Natural killer cell (primary cell): ENCODE measurements at regions of chr6 and their contacts with region 1.

Region 1: DNA sequence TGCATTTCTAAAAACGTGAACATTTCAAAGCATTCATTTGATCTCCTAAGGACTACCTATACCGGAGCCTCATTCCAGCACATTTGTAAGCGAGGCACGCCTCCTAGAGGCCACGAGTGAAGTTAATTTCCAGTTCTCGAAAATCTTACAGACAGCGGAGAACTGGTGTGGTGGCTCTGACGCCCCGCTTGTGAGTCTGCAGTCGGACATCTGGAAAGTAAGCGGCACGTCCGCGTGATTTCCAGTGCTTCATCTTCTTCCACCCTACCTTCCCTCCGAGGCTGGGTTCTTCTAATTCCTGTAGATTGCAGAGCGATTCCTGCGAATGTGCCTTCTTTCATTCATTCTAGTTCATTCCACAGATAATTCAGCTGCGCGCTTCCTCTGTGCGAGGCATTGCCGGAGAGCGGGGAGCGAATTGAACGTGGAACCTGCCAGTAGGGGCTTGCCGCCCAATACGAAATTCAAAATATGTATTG is 810 bp upstream of the PRIM2 start:
- DNase-seq: peak; percentile 70 to 92
- ATAC-seq: peak; percentile 84 to 92 (median 86)
- H3K4me3 ChIP-seq: peak overlapping the region; percentile 70
- H3K4me3 Mint-ChIP-seq: peak overlapping the region; percentile 97
- H3K27ac ChIP-seq: peak overlapping the region; percentile 6
- H3K27ac Mint-ChIP-seq: peak overlapping the region; percentile 88 to 94
- H3K4me1 ChIP-seq: peaks cover 12% of the 10 kb centered on the region
- H3K4me1 Mint-ChIP-seq: peaks cover 27 to 39% of the 10 kb centered on the region in 2 donors
- H3K27me3 ChIP-seq: no peaks in the 10 kb centered on the region
- H3K27me3 Mint-ChIP-seq: peaks cover 0 to 16% of the 10 kb centered on the region in 2 donors
- CTCF ChIP-seq: peak; percentile 94

Region 2: GRCh38 chr6:56637640-56638039 is 679.0 kb before region 1 on chr6:
- intact Hi-C with region 1: loop called (anchors 5 kb)
- DNase-seq: peak in 1 of 2 donors; percentile 25
- ATAC-seq: no peak
- H3K4me3 ChIP-seq: no peak overlapping the region
- H3K4me3 Mint-ChIP-seq: no peak overlapping the region
- H3K27ac ChIP-seq: no peak overlapping the region
- H3K27ac Mint-ChIP-seq: no peak overlapping the region
- H3K4me1 ChIP-seq: no peaks in the 10 kb centered on the region
- H3K4me1 Mint-ChIP-seq: no peaks in the 10 kb centered on the region
- H3K27me3 ChIP-seq: no peaks in the 10 kb centered on the region
- H3K27me3 Mint-ChIP-seq: no peaks in the 10 kb centered on the region
- CTCF ChIP-seq: peak; percentile 48

Region 3: DNA sequence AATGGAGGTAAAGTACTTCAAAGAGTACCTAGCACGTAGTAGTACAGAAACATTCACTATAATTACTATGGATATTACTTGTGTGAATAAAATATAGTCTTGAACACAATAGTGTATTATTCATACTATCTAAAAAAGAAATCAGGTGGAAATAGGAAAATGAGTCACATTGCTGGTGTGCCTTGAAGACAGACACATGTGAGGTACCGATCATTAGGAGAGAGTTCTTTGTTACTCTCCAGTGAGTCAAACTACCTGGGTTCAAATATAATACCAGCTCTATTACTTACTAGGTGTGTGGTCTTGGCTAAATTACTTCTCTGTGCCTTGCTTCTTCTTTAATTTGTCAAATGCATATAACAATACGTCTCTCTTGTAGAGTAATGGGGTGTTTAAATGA is 412.6 kb before region 1 on chr6:
- intact Hi-C with region 1: loop called (anchors 1 kb)
- DNase-seq: no peak
- ATAC-seq: no peak
- H3K4me3 ChIP-seq: no peak overlapping the region
- H3K4me3 Mint-ChIP-seq: no peak overlapping the region
- H3K27ac ChIP-seq: no peak overlapping the region
- H3K27ac Mint-ChIP-seq: no peak overlapping the region
- H3K4me1 ChIP-seq: peaks cover 4% of the 10 kb centered on the region
- H3K4me1 Mint-ChIP-seq: no peaks in the 10 kb centered on the region
- H3K27me3 ChIP-seq: no peaks in the 10 kb centered on the region
- H3K27me3 Mint-ChIP-seq: peaks cover 5 to 15% of the 10 kb centered on the region in 2 donors
- CTCF ChIP-seq: no peak

Region 4: DNA sequence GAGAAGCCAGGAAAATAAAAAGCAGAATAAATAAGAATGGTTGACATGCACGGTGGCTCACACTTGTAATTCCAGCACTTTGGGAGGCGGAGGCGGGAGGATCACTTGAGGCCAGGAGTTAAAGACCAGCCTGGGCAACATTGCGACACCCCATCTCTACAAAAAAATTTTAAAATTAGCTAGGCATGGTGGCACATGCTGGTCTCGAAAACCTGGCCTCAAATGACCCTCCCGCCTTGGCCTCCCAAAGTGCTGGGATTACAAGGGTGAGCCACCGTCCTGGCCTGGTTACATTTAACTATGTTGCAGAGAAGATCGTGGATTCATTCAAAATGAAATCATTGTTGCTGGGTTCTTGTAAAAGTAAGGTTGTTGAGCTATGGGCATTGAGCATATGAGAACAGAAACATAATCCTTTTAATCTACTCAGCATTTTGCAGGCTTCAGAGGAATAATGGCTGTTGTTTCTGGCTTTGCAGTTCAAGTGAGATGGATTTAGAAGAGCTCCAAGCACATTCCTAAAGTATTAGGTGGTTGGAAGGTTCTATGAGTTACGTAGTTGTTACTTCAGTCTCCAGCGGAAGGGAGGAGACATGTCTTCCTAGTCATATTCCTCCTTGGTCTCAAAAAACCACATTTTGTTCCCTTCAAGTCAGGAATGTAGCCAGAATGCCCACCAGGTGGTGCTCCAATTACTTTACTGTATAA is 48.9 kb before region 1 on chr6:
- intact Hi-C with region 1: loop called (anchors 1 kb)
- DNase-seq: peak in 1 of 2 donors; percentile 65
- ATAC-seq: peak in 2 of 3 donors; percentile 39 to 53
- H3K4me3 ChIP-seq: no peak overlapping the region
- H3K4me3 Mint-ChIP-seq: no peak overlapping the region
- H3K27ac ChIP-seq: no peak overlapping the region
- H3K27ac Mint-ChIP-seq: no peak overlapping the region
- H3K4me1 ChIP-seq: no peaks in the 10 kb centered on the region
- H3K4me1 Mint-ChIP-seq: no peaks in the 10 kb centered on the region
- H3K27me3 ChIP-seq: no peaks in the 10 kb centered on the region
- H3K27me3 Mint-ChIP-seq: peaks cover 15 to 25% of the 10 kb centered on the region in 2 donors
- CTCF ChIP-seq: peak; percentile 34

Region 5: GRCh38 chr6:57421503-57421902 is 104.9 kb after region 1 on chr6:
- intact Hi-C with region 1: no loop called
- DNase-seq: no peak
- ATAC-seq: no peak
- H3K4me3 ChIP-seq: no peak overlapping the region
- H3K4me3 Mint-ChIP-seq: no peak overlapping the region
- H3K27ac ChIP-seq: no peak overlapping the region
- H3K27ac Mint-ChIP-seq: no peak overlapping the region
- H3K4me1 ChIP-seq: no peaks in the 10 kb centered on the region
- H3K4me1 Mint-ChIP-seq: peaks cover 6 to 16% of the 10 kb centered on the region in 2 donors
- H3K27me3 ChIP-seq: no peaks in the 10 kb centered on the region
- H3K27me3 Mint-ChIP-seq: no peaks in the 10 kb centered on the region
- CTCF ChIP-seq: no peak